ENCODE measurements at regions of chr1 and their contacts with region 1.

Region 1: DNA sequence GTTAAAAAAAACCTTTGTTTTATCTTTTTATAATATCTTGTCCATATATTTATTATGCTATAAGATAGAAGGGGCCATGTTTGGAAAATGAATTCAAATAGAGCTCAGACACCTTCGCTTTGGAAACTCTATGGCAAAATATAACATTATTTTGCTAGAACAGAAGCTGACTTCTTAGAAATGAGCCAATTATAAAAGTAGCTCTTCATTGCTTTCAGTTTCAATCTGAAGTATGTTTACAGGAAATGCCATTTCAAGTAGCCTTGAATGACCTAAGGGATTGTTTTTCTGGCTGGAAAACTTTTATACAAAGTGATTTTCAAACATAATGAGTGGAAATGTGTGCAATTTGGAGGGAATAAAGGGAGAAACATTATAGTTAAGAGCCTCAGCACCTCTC is 37.8 kb upstream of the GBP5 start:
- DNase-seq: peak in 5 of 9 donors; percentile 15 to 38 (median 24)
- ATAC-seq: peak; percentile 48
- H3K4me3 ChIP-seq: peak overlapping the region; percentile 17
- H3K4me3 Mint-ChIP-seq: peak overlapping the region in 9 of 10 donors; percentile 33 to 85 (median 69)
- H3K27ac ChIP-seq: peak overlapping the region; percentile 41
- H3K27ac Mint-ChIP-seq: peak overlapping the region; percentile 76 to 98 (median 89)
- H3K4me1 ChIP-seq: peaks cover 39 to 40% of the 10 kb centered on the region in 2 donors
- H3K4me1 Mint-ChIP-seq: peaks cover 29 to 64% (median 57%) of the 10 kb centered on the region in 7 donors
- H3K27me3 ChIP-seq: no peaks in the 10 kb centered on the region
- H3K27me3 Mint-ChIP-seq: no peaks in the 10 kb centered on the region

Region 2: DNA sequence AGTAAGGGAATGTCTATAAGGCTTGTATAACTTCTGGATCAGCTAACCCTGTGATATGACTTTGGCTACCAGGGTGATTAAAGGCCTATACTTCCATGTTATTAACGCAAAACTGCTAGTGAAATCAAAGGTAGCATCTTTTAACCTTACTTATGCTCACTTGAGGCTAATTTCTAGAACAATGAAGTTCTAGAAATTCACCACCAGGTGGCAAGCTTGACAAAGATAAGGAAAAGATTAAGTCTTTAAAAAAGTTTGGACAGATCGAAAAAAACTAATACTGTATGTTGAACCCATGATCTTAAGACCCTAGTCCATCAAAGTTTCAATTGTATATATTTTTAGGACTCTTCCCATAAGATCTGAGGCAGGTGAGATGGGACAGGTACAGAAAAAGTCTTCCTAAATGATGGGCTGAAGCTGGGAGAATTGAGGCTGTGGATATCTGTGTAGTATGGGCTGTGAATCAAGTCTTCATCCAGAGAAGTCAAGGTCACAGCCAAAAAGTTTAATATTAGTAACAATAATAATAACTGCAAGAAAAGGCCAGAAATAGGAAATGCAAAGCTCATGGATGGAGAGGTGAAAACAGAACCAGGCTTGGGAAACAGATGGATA is 336.9 kb before region 1 on chr1:
- CTCF ChIA-PET with region 1: no interaction called
- POLR2A ChIA-PET with region 1: no interaction called
- intact Hi-C with region 1: no loop called
- DNase-seq: peak in 3 of 9 donors; percentile 11 to 34 (median 18)
- ATAC-seq: peak; percentile 47
- H3K4me3 ChIP-seq: no peak overlapping the region
- H3K4me3 Mint-ChIP-seq: no peak overlapping the region
- H3K27ac ChIP-seq: no peak overlapping the region
- H3K27ac Mint-ChIP-seq: peak overlapping the region in 1 of 9 donors; percentile 33
- H3K4me1 ChIP-seq: peaks cover 0 to 5% of the 10 kb centered on the region in 2 donors
- H3K4me1 Mint-ChIP-seq: peaks cover 15 to 39% (median 24%) of the 10 kb centered on the region in 7 donors
- H3K27me3 ChIP-seq: no peaks in the 10 kb centered on the region
- H3K27me3 Mint-ChIP-seq: no peaks in the 10 kb centered on the region

Region 3: DNA sequence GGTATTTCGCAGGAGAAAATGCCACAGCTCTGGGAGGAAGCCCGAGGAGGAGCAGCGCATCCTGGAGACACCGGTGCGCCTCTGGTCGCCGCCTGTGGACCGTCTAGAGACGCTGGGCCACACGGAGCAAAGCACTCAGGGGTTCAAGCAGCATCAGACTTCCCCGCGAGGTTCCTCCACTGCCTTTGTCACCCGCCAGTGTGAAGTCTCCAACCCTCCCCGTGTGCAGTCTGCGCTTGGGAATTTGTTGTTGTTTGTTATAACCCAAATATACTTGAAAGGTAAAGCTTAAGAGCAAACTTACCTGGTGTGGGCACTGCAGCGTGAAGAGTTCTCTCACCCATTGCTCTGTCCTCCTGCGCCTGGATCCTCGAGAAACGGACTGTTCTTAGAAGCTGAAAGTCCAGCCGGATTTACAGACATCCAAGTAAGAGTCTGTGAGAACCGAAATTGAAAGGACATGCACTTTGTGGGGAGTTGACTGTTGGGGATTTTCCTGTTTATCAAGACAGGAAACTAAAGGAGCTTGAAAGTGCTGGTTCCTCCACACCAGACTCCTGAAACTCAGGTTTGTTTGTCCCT is 111.9 kb before region 1 on chr1 and contains the start of gene GBP4:
- CTCF ChIA-PET with region 1: no interaction called
- POLR2A ChIA-PET with region 1: no interaction called
- intact Hi-C with region 1: loop called in 1 of 2 experiments (anchors 1 kb)
- DNase-seq: peak; percentile 25 to 49 (median 41)
- ATAC-seq: peak; percentile 73
- H3K4me3 ChIP-seq: peak within 1 kb of the TSS; percentile 92
- H3K4me3 Mint-ChIP-seq: peak within 1 kb of the TSS; percentile 91 to 99 (median 97)
- H3K27ac ChIP-seq: peak within 1 kb of the TSS; percentile 88
- H3K27ac Mint-ChIP-seq: peak within 1 kb of the TSS; percentile 91 to 99 (median 95)
- H3K4me1 ChIP-seq: peaks cover 42 to 47% of the 10 kb centered on the region in 2 donors
- H3K4me1 Mint-ChIP-seq: peaks cover 51 to 82% (median 71%) of the 10 kb centered on the region in 7 donors
- H3K27me3 ChIP-seq: no peaks in the 10 kb centered on the region
- H3K27me3 Mint-ChIP-seq: no peaks in the 10 kb centered on the region
- total RNA-seq, gene GBP4: 29.1 to 174 (median 37.4) TPM

Region 4: GRCh38 chr1:89286549-89287180 is 23.8 kb before region 1 on chr1:
- CTCF ChIA-PET with region 1: interaction called, 3 read pairs
- POLR2A ChIA-PET with region 1: interaction called, 5 read pairs
- intact Hi-C with region 1: loop called (anchors 1 to 2 kb)
- DNase-seq: peak in 6 of 9 donors; percentile 25 to 65 (median 48)
- ATAC-seq: peak; percentile 77
- H3K4me3 ChIP-seq: peak overlapping the region; percentile 41
- H3K4me3 Mint-ChIP-seq: peak overlapping the region; percentile 63 to 83 (median 76)
- H3K27ac ChIP-seq: peak overlapping the region; percentile 63
- H3K27ac Mint-ChIP-seq: peak overlapping the region; percentile 76 to 96 (median 91)
- H3K4me1 ChIP-seq: peaks cover 40 to 52% of the 10 kb centered on the region in 2 donors
- H3K4me1 Mint-ChIP-seq: peaks cover 48 to 78% (median 74%) of the 10 kb centered on the region in 7 donors
- H3K27me3 ChIP-seq: no peaks in the 10 kb centered on the region
- H3K27me3 Mint-ChIP-seq: no peaks in the 10 kb centered on the region

Region 5: DNA sequence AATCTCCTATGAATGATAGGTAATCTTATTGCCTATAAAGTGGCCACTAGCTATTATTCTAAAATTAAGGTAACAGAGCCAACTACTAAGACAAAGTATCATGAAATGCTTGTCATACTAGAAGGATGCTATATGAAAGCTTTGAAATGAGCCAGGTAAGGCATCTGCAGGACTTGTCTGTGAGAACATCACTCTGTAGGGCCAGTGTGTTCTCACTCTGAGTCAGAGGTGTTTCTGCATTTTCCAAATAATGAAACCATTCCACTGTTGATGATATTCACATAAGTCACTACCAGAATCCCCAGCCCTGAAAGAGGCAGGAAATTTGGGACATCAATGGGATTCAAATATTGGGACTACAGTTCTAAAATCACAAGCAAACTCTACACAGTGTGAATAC is 12.0 kb before region 1 on chr1:
- CTCF ChIA-PET with region 1: interaction called, 3 read pairs
- POLR2A ChIA-PET with region 1: interaction called, 14 read pairs
- intact Hi-C with region 1: loop called (anchors 1 to 2 kb)
- DNase-seq: no peak
- ATAC-seq: no peak
- H3K4me3 ChIP-seq: no peak overlapping the region
- H3K4me3 Mint-ChIP-seq: peak overlapping the region in 1 of 10 donors; percentile 57
- H3K27ac ChIP-seq: no peak overlapping the region
- H3K27ac Mint-ChIP-seq: peak overlapping the region in 4 of 9 donors; percentile 6 to 75 (median 59)
- H3K4me1 ChIP-seq: peaks cover 6 to 19% of the 10 kb centered on the region in 2 donors
- H3K4me1 Mint-ChIP-seq: peaks cover 16 to 71% (median 44%) of the 10 kb centered on the region in 7 donors
- H3K27me3 ChIP-seq: no peaks in the 10 kb centered on the region
- H3K27me3 Mint-ChIP-seq: no peaks in the 10 kb centered on the region